IMR-90 (cell line): ENCODE measurements at regions of chr6 and their contacts with region 1.

Region 1: DNA sequence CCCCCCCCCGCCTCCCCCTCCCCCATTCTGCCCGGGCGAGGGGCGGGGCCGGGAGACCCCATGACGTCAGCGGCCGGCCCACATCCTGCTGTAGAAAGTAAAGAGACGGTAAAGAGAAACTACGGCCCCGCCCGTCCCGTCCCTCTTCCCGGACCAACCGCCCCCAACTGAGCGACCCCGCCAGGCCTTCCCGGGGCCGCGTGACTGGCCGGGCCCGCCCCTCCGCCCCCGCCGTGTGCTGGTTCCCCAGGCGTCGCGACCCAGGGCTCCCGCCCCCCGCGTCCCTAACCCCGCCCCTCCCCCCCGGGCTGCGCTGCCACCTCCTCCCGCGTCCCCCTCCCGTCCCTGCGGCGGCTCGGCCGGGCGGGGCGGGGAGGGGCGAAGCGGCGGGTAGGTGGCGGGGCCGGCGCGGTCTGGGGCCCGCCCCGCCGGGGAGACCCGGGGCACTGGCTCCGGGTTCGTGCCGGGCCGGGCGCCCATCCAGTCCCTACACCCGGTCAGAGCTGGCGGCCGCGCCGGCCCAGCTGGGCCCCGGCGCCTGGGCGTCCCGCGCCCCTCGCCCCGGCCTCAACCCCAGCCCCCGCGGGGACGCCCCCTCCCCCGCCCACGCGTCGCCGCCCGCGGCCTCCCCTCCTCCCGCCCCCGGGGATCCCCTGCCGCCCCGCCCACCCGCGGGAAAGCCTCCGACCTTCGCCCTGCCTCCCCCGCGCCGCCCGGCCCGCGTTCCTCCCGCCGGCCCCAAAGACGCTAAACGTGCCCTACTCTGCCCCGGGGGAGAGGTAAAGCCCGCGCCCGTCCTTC is 636 bp upstream of the HIVEP1 start:
- DNase-seq: peak; percentile 96
- ATAC-seq: peak; percentile 72
- H3K4me3 ChIP-seq: peak overlapping the region; percentile 76
- H3K27ac ChIP-seq: peak overlapping the region; percentile 63; the same call in 1 of the 2 replicates
- H3K4me1 ChIP-seq: no peaks in the 10 kb centered on the region; the same call in 1 of the 2 replicates
- H3K27me3 ChIP-seq: no peaks in the 10 kb centered on the region
- CTCF ChIP-seq: no peak
- POLR2A ChIP-seq: peak; percentile 66
- RAD21 ChIP-seq: no peak

Region 2: DNA sequence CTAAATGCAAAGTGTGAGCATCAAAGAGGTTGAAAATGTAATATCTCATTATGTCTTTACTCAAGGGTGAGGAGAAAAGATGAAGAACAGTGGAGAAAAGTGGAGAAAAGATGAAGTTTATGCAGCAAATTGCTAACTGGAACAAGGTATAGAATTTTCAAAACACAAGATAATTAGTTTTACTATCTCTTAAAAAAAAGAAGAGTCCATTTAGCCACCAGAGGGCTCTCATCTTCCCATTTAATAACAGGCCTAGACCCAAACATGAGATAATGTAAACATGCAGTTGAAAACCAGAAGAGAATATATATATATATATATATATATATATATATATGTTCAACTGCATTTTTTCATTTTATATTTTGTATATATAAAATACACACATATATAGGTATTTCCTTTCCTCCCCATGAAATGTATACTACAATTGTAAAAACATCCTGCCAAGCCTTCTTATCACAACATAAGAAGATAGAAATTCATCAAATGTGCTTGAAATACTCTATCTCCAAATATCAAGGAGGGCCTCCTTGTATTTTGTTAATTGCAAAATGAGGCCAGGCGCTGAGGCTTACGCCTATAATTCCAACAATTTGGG is 311.3 kb before region 1 on chr6:
- CTCF ChIA-PET with region 1: no interaction called
- POLR2A ChIA-PET with region 1: no interaction called
- dilution Hi-C with region 1: no loop called
- in situ Hi-C with region 1: loop called (anchors 10 kb)
- intact Hi-C with region 1: loop called (anchors 1 kb)
- DNase-seq: peak; percentile 73
- ATAC-seq: peak; percentile 29; the same call in 1 of the 2 replicates
- H3K4me3 ChIP-seq: no peak overlapping the region
- H3K27ac ChIP-seq: no peak overlapping the region
- H3K4me1 ChIP-seq: peaks cover 6% of the 10 kb centered on the region; the same call in 1 of the 2 replicates
- H3K27me3 ChIP-seq: no peaks in the 10 kb centered on the region
- CTCF ChIP-seq: peak; percentile 64
- POLR2A ChIP-seq: no peak
- RAD21 ChIP-seq: peak; percentile 69

Region 3: GRCh38 chr6:11854408-11855165 is 156.9 kb before region 1 on chr6:
- CTCF ChIA-PET with region 1: no interaction called
- POLR2A ChIA-PET with region 1: no interaction called
- dilution Hi-C with region 1: no loop called
- in situ Hi-C with region 1: no loop called
- intact Hi-C with region 1: loop called (anchors 5 kb)
- DNase-seq: peak; percentile 89
- ATAC-seq: peak; percentile 84
- H3K4me3 ChIP-seq: no peak overlapping the region
- H3K27ac ChIP-seq: peak overlapping the region; percentile 82; the same call in 1 of the 2 replicates
- H3K4me1 ChIP-seq: peaks cover 13% of the 10 kb centered on the region
- H3K27me3 ChIP-seq: no peaks in the 10 kb centered on the region
- CTCF ChIP-seq: no peak
- POLR2A ChIP-seq: no peak
- RAD21 ChIP-seq: peak; percentile 17

Region 4: GRCh38 chr6:12137480-12137879 is 126.0 kb after region 1 on chr6:
- CTCF ChIA-PET with region 1: no interaction called
- POLR2A ChIA-PET with region 1: no interaction called
- dilution Hi-C with region 1: no loop called
- in situ Hi-C with region 1: no loop called
- intact Hi-C with region 1: loop called (anchors 5 kb)
- DNase-seq: peak; percentile 85
- ATAC-seq: no peak
- H3K4me3 ChIP-seq: no peak overlapping the region
- H3K27ac ChIP-seq: no peak overlapping the region
- H3K4me1 ChIP-seq: peaks cover 4% of the 10 kb centered on the region
- H3K27me3 ChIP-seq: no peaks in the 10 kb centered on the region
- CTCF ChIP-seq: no peak
- POLR2A ChIP-seq: no peak
- RAD21 ChIP-seq: no peak

Region 5: GRCh38 chr6:12289933-12290820 is 278.7 kb after region 1 on chr6 and contains the start of gene EDN1:
- CTCF ChIA-PET with region 1: interaction called, 8 read pairs
- POLR2A ChIA-PET with region 1: no interaction called
- dilution Hi-C with region 1: no loop called
- in situ Hi-C with region 1: no loop called
- intact Hi-C with region 1: loop called (anchors 2 kb)
- DNase-seq: peak; percentile 84
- ATAC-seq: peak; percentile 88
- H3K4me3 ChIP-seq: peak within 1 kb of the TSS; percentile 74
- H3K27ac ChIP-seq: peak within 1 kb of the TSS; percentile 83
- H3K4me1 ChIP-seq: peaks cover 12% of the 10 kb centered on the region
- H3K27me3 ChIP-seq: no peaks in the 10 kb centered on the region
- CTCF ChIP-seq: peak; percentile 45
- POLR2A ChIP-seq: peak; percentile 89
- RAD21 ChIP-seq: peak; percentile 52
- total RNA-seq, gene EDN1: 5.6 and 8.6 TPM in 2 replicates